HCT116 (cell line): ENCODE measurements at regions of chr19 and their contacts with region 1.

Region 1: GRCh38 chr19:49869441-49870176 is 2.2 kb upstream of the PNKP start:
- DNase-seq: peak; percentile 100
- ATAC-seq: peak; percentile 77
- H3K4me3 ChIP-seq: peak overlapping the region; percentile 55 to 61
- H3K27ac ChIP-seq: peak overlapping the region; percentile 91
- H3K4me1 ChIP-seq: peaks cover 29 to 55% of the 10 kb centered on the region in 2 experiments; a peak in 3 of 4 replicates
- H3K27me3 ChIP-seq: no peaks in the 10 kb centered on the region
- CTCF ChIP-seq: no peak
- POLR2A ChIP-seq: peak; percentile 69
- RAD21 ChIP-seq: no peak

Region 2: DNA sequence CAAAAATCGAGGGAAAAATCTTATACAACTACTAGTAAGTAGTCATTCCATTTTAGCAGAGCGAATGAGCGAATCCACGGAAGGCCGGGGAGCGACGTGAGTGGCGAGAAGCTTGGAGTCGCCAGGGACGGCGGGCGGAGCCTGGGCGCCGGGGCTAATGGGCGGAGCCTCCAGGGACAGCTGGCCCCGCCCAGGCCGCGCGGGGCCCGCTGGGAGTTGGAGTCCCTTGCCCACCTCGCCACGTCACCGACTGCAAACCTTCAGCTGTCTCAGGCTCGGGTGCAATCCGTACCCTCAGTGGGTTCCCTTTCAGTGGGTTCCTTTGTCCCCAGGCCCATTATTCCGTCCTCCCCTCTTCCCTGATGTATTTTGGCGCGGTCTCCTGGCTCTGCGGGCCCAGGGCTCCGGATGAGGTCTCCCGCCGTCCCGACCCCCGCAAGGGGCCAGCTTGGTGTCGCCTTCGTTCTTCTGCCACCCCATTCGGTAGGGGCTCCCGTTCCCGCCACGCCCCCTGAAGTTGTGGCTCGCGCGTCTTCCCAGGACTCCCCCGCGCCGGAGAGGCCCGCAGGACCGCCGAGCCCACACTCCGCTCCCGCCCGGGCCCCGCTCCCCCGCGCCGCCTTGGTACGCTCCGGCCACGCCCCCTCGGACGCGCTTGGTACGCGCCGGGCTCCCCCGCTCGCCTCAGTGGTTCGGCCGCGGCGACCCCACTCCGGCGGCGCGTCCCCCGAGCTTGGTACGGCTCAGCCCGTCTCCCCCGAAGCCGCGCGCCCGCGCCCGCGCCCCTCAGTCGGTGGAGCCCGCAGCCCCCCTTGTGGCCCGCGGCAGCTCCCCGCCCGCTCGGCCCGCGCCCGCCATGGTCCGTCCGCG is 18.9 kb before region 1 on chr19 and contains the start of gene PTOV1:
- CTCF ChIA-PET with region 1: interaction called, 3 read pairs
- POLR2A ChIA-PET with region 1: interaction called, 13 read pairs
- RAD21 ChIA-PET with region 1: no interaction called
- intact Hi-C with region 1: no loop called
- DNase-seq: peak; percentile 84
- ATAC-seq: peak; percentile 81
- H3K4me3 ChIP-seq: peak within 1 kb of the TSS; percentile 85 to 90
- H3K27ac ChIP-seq: peak within 1 kb of the TSS; percentile 91
- H3K4me1 ChIP-seq: peaks cover 34 to 42% of the 10 kb centered on the region in 2 experiments
- H3K27me3 ChIP-seq: no peaks in the 10 kb centered on the region
- CTCF ChIP-seq: no peak
- POLR2A ChIP-seq: peak; percentile 57
- RAD21 ChIP-seq: no peak
- total RNA-seq, gene PTOV1: 236 TPM